ENCODE measurements at regions of chr22 and their contacts with region 1.

Region 1: DNA sequence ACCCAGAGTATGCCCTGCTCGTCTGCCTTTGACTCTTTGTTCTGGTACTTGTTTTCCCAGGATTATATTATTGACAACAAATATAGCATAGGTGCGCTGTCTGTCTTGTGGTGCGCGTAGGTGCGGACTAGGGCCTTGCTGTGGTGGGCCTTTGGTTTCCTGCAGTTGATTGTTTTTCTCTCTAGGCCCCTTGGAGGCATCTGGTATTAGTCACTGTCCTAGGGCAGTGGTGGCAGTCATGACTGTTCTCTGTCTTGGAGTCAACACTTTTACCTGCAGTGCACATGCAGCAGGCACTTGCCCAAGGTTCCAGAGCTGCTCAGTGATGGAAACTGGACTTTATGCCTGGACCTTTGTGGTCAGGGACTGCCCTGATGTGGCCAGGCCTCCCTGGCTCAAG is 18.6 kb downstream of the PPP6R2 start:
- DNase-seq: no peak
- H3K4me3 ChIP-seq: no peak overlapping the region
- H3K27ac ChIP-seq: no peak overlapping the region
- H3K4me1 ChIP-seq: peaks cover 0 to 14% (median 4%) of the 10 kb centered on the region in 4 experiments
- H3K27me3 ChIP-seq: no peaks in the 10 kb centered on the region

Region 2: GRCh38 chr22:50161508-50162390 is 199.9 kb before region 1 on chr22:
- CTCF ChIA-PET with region 1: no interaction called
- POLR2A ChIA-PET with region 1: no interaction called
- DNase-seq: no peak
- H3K4me3 ChIP-seq: no peak overlapping the region
- H3K27ac ChIP-seq: no peak overlapping the region
- H3K4me1 ChIP-seq: no peaks in the 10 kb centered on the region
- H3K27me3 ChIP-seq: peaks cover 0 to 4% (median 0%) of the 10 kb centered on the region in 5 experiments

Region 3: GRCh38 chr22:50376085-50376651 is 14.5 kb after region 1 on chr22:
- CTCF ChIA-PET with region 1: interaction called, 13 read pairs
- POLR2A ChIA-PET with region 1: interaction called, 3 read pairs
- DNase-seq: peak; percentile 32 to 72 (median 69)
- H3K4me3 ChIP-seq: peak overlapping the region in 4 of 7 experiments; percentile 19 to 61 (median 34)
- H3K27ac ChIP-seq: peak overlapping the region; percentile 36 to 75
- H3K4me1 ChIP-seq: peaks cover 0 to 18% (median 14%) of the 10 kb centered on the region in 4 experiments
- H3K27me3 ChIP-seq: no peaks in the 10 kb centered on the region